WTC11 (cell line): ENCODE measurements at regions of chr11 and their contacts with region 1.

Region 1: GRCh38 chr11:30254307-30255298 is 23.8 kb downstream of the FSHB start:
- DNase-seq: no peak
- ATAC-seq: no peak; the same call in 1 of the 2 replicates
- H3K4me3 Mint-ChIP-seq: no peak overlapping the region
- H3K27ac Mint-ChIP-seq: no peak overlapping the region
- H3K4me1 Mint-ChIP-seq: no peaks in the 10 kb centered on the region
- H3K27me3 Mint-ChIP-seq: peaks cover 14% of the 10 kb centered on the region
- CTCF ChIP-seq: no peak

Region 2: DNA sequence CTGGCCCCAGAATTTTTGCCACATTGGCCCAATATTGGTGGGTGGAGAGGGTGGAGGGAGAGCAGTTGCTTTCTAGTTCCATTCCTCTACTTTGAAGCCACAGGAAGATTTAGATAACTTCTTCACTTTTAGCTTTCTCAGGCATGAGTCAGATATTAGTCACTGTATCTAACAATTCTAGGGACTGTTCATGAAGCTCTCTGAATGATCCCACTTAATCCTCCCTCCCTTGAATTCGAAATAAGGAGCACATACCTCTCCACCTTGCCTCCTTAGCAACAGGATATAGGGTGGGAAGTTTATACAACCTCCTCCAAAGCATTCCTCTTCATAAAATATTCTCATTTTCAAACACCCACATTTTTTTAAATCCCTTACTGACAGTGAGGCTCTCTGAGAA is 10.3 kb before region 1 on chr11:
- CTCF ChIA-PET with region 1: interaction called, 17 read pairs
- POLR2A ChIA-PET with region 1: no interaction called
- DNase-seq: no peak
- ATAC-seq: no peak
- H3K4me3 Mint-ChIP-seq: no peak overlapping the region
- H3K27ac Mint-ChIP-seq: no peak overlapping the region
- H3K4me1 Mint-ChIP-seq: no peaks in the 10 kb centered on the region
- H3K27me3 Mint-ChIP-seq: peaks cover 16% of the 10 kb centered on the region
- CTCF ChIP-seq: no peak

Region 3: GRCh38 chr11:30282289-30282631 is 27.7 kb after region 1 on chr11:
- CTCF ChIA-PET with region 1: no interaction called
- POLR2A ChIA-PET with region 1: no interaction called
- DNase-seq: no peak
- ATAC-seq: peak; percentile 56
- H3K4me3 Mint-ChIP-seq: no peak overlapping the region
- H3K27ac Mint-ChIP-seq: no peak overlapping the region
- H3K4me1 Mint-ChIP-seq: no peaks in the 10 kb centered on the region
- H3K27me3 Mint-ChIP-seq: no peaks in the 10 kb centered on the region
- CTCF ChIP-seq: no peak

Region 4: GRCh38 chr11:30342736-30343166 is 88.1 kb after region 1 on chr11:
- CTCF ChIA-PET with region 1: no interaction called
- POLR2A ChIA-PET with region 1: no interaction called
- DNase-seq: no peak
- ATAC-seq: no peak
- H3K4me3 Mint-ChIP-seq: no peak overlapping the region
- H3K27ac Mint-ChIP-seq: no peak overlapping the region
- H3K4me1 Mint-ChIP-seq: no peaks in the 10 kb centered on the region
- H3K27me3 Mint-ChIP-seq: no peaks in the 10 kb centered on the region
- CTCF ChIP-seq: no peak